Ovary (tissue), 10 donors: ENCODE measurements at regions of chr9 and their contacts with region 1.

Region 1: DNA sequence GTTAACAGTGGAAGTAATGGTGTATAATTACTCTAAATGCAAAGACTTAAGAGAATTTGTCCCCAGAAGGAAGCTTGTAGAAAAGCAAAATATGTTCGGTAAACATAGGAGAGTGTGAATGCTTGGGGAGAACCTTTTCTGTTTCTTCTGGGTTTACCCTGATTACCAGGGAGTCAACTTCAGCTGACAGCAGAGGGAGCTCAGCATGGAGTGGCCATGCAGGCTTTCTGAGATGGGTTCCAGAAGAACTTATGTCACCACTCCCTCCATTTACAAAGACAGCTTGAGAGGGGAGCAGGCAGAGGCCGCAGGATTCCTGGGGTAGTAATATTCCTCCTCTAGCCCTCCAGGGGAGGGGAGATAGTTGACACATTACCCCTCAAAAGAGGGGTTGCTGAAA is 95.7 kb downstream of the SLC28A3 start:
- DNase-seq: no peak
- H3K4me3 ChIP-seq: no peak overlapping the region
- H3K27ac ChIP-seq: no peak overlapping the region
- H3K4me1 ChIP-seq: no peaks in the 10 kb centered on the region
- H3K27me3 ChIP-seq: no peaks in the 10 kb centered on the region
- CTCF ChIP-seq: no peak
- EP300 ChIP-seq: no peak
- POLR2A ChIP-seq: no peak

Region 2: DNA sequence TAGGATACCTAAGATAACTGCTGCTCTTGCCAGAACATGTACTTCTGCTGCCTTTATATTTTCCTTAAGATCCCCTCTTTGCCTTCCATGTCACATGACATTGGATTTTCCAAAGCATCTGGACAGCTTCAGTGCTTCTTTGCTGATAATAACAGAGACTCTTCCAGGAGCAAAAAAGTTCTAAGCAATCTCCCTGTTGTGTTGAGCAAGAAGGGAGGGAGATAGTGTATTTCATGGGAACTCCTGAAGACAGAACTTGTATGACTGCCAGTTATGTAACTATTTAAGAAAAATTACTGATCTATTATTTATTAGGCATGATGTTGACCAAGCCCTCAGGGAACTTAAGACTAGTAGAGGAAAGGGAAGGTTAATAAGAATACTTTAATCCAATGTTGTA is 1801.5 kb before region 1 on chr9:
- intact Hi-C with region 1: loop called in 1 of 4 experiments (anchors 10 kb)
- DNase-seq: no peak
- H3K4me3 ChIP-seq: no peak overlapping the region
- H3K27ac ChIP-seq: no peak overlapping the region
- H3K4me1 ChIP-seq: no peaks in the 10 kb centered on the region
- H3K27me3 ChIP-seq: no peaks in the 10 kb centered on the region
- CTCF ChIP-seq: no peak
- EP300 ChIP-seq: no peak
- POLR2A ChIP-seq: no peak